Calu3 (cell line): ENCODE measurements at regions of chr16 and their contacts with region 1.

Region 1: DNA sequence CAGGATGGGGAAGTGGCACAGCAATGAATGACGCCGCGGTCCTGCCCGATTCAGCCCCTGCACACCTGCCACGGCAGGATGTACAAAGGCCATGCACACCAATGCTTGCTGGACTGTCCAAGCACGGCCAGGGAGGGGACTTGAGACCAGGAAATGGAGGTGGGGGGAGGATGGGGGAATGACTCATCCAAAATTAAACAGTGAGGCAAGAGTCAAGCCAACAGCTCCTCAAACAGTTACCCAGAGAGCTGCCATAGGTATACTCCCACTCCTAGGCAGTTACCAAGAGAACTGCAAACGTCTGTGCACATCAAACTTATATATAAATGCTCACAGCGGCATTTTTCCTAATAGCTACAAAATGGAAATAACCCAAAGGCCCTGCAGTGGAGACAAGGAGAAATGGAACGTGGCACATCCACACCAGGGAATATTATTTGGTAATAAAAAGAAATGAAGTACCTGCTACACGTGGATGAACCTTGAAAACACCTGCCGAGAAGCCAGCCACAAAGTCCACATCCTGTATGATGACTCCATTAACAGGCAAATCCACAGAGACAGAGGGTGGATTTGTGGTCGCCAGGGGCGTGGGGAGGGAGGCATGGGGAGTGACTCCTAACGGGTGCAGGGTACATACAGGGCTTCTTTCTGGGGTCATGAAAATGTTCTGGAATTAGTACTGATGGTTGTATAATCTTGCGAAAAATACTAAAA is 54.1 kb downstream of the VAC14 start:
- DNase-seq: peak; percentile 94
- H3K4me3 Mint-ChIP-seq: peak overlapping the region; percentile 55
- H3K27ac Mint-ChIP-seq: peak overlapping the region; percentile 97
- H3K4me1 Mint-ChIP-seq: peaks cover 55% of the 10 kb centered on the region
- H3K27me3 Mint-ChIP-seq: no peaks in the 10 kb centered on the region
- CTCF ChIP-seq: no peak

Region 2: GRCh38 chr16:70685938-70686375 is 60.9 kb before region 1 on chr16 and contains the start of gene MTSS2:
- CTCF ChIA-PET with region 1: interaction called, 4 read pairs
- intact Hi-C with region 1: loop called (anchors 10 kb)
- DNase-seq: peak; percentile 76
- H3K4me3 Mint-ChIP-seq: peak within 1 kb of the TSS; percentile 76
- H3K27ac Mint-ChIP-seq: peak within 1 kb of the TSS; percentile 77
- H3K4me1 Mint-ChIP-seq: peaks cover 14% of the 10 kb centered on the region
- H3K27me3 Mint-ChIP-seq: no peaks in the 10 kb centered on the region
- CTCF ChIP-seq: no peak
- total RNA-seq, gene MTSS2: 27.1 and 28.3 TPM in 2 replicates

Region 3: DNA sequence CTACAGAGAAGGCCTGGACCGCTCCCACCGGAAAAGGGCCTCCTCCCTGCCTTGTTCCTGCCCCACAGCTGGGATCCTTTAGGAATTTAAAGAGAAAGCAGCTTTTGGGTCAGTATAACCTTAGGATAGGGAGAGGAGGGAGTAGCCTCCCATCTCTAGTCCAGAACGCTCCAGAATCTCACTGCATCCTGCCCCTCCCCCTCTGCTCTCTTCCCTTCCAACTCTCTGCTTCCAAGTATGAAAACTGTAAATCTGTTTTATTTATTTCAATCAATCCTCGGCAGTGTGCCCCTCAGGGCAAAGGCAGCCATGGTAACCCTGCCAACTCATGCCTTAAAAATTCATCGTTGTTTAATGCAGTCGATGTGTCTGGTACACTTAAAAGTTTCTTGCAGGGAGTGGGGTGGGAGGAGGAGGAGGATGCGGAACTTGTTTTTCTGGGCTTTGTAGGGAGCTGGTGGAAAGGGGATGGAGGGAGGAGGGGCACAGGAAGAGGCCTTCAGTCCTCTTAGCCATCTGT is 39.9 kb before region 1 on chr16:
- CTCF ChIA-PET with region 1: no interaction called
- intact Hi-C with region 1: loop called (anchors 5 kb)
- DNase-seq: peak; percentile 61
- H3K4me3 Mint-ChIP-seq: no peak overlapping the region
- H3K27ac Mint-ChIP-seq: peak overlapping the region; percentile 32
- H3K4me1 Mint-ChIP-seq: peaks cover 33% of the 10 kb centered on the region
- H3K27me3 Mint-ChIP-seq: no peaks in the 10 kb centered on the region
- CTCF ChIP-seq: no peak